Activated CD4-positive, alpha-beta memory T cell treated with anti-CD3 and anti-CD28 coated beads for 36 hours (primary cell): ENCODE measurements at regions of chr6 and their contacts with region 1.

Region 1: GRCh38 chr6:391559-392440 is at the start of gene IRF4:
- DNase-seq: peak; percentile 83
- H3K4me3 Mint-ChIP-seq: peak within 1 kb of the TSS; percentile 94
- H3K27ac Mint-ChIP-seq: peak within 1 kb of the TSS; percentile 99
- H3K4me1 Mint-ChIP-seq: peaks cover 50% of the 10 kb centered on the region
- H3K27me3 Mint-ChIP-seq: peaks cover 5% of the 10 kb centered on the region
- total RNA-seq, gene IRF4: 689 to 705 TPM

Region 2: DNA sequence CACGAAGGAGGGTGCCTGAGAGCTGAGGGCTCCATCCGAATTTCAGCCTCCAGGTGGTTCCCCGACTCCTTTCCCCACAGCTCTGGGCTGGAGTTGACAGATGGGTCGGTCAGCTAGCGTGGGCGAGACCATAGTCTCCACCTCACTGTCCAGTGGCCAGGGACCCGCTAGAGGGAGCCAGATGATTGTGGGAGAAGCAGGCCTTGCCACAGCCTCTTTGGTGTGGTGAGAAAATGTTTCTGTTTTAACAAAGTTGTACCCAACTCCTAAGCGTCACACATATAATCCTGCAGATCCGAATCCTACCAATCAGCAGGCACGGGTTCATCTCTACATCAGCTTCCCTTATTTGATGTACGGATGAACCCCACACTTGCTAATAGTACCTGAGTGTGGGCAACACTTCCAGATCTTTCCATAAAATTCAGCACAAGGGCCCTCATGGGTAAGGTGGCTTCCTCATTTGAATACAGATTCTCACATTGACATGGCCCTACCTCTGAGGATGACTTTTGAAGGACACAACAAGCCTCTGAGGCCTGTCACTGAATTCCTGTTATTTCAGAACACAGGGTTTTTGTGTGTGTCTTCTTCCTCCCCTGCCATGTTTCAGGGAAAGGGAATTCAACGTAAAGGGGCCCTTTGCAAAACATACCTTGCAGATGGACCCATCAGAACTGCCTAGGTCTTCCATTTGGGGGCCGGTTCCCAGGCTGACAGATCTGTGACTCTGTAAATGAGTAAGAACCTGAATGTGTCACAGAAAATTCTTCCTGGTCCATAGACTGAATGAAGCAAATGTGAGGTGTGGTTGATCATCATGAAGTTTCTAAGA is 202.8 kb before region 1 on chr6:
- CTCF ChIA-PET with region 1: interaction called, 54 read pairs
- POLR2A ChIA-PET with region 1: interaction called, 16 read pairs
- intact Hi-C with region 1: loop called (anchors 1 kb)
- DNase-seq: peak; percentile 93
- H3K4me3 Mint-ChIP-seq: peak overlapping the region; percentile 1
- H3K27ac Mint-ChIP-seq: peak overlapping the region; percentile 64
- H3K4me1 Mint-ChIP-seq: peaks cover 44% of the 10 kb centered on the region
- H3K27me3 Mint-ChIP-seq: peaks cover 2% of the 10 kb centered on the region

Region 3: GRCh38 chr6:319177-320131 is 72.3 kb before region 1 on chr6:
- CTCF ChIA-PET with region 1: interaction called, 5 read pairs
- POLR2A ChIA-PET with region 1: interaction called, 7 read pairs
- intact Hi-C with region 1: loop called (anchors 2 kb)
- DNase-seq: peak; percentile 55
- H3K4me3 Mint-ChIP-seq: no peak overlapping the region
- H3K27ac Mint-ChIP-seq: peak overlapping the region; percentile 60
- H3K4me1 Mint-ChIP-seq: peaks cover 20% of the 10 kb centered on the region
- H3K27me3 Mint-ChIP-seq: peaks cover 2% of the 10 kb centered on the region

Region 4: DNA sequence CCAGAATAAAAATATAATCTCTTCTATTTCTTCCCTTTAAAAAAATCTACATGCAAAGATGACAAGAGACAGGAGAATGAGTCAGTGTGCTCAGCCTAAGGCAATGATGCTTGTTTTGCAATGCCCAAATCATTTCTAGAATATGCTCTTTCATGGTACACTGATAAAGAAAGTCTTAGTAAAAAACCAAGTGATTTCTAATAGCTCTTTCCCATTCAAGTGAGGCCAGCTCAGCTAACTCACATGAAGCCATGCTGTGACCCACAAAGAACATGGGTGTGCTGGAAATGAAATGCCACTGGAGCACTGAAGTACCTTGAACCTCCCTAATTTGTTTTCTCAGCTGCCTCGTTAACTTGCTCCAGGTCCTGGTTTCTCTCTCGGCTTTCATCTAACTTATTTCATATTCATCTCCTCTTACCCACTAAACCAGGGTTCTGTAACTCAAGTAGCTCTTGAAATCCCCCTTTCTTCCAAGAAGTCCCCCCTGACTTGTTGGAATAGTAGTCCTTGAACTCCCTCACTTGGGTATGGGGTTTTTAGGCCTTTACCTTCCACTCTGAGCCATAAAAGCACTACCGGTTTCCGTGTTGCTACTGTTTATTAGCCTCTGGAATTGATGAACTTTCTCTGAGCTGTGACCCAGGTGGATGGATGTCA is 92.4 kb after region 1 on chr6:
- CTCF ChIA-PET with region 1: no interaction called
- POLR2A ChIA-PET with region 1: interaction called, 136 read pairs
- intact Hi-C with region 1: no loop called
- DNase-seq: peak; percentile 75
- H3K4me3 Mint-ChIP-seq: peak overlapping the region; percentile 58
- H3K27ac Mint-ChIP-seq: peak overlapping the region; percentile 99
- H3K4me1 Mint-ChIP-seq: peaks cover 73% of the 10 kb centered on the region
- H3K27me3 Mint-ChIP-seq: no peaks in the 10 kb centered on the region

Region 5: DNA sequence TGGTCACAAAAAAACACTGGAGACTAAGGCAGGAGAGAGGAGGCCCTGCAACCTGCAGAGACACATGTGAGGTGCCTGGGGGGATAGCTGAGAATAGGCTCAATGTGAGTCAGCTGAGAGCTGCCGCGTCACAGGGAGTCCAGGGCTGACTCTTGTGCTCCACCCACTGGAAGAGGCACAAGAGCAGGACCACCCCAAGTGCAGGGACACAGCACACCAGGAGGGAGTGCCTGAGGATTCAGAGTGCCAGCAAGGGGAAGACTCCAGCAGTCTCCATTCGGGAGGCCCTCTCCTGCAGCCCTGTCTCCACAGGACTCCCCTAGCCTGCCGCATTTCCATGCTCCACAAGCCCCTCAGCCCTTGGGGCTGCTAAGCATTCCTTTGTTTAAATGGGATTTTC is 159.6 kb after region 1 on chr6:
- CTCF ChIA-PET with region 1: interaction called, 3 read pairs
- POLR2A ChIA-PET with region 1: interaction called, 27 read pairs
- intact Hi-C with region 1: loop called (anchors 1 kb)
- DNase-seq: peak; percentile 68
- H3K4me3 Mint-ChIP-seq: no peak overlapping the region
- H3K27ac Mint-ChIP-seq: peak overlapping the region; percentile 97
- H3K4me1 Mint-ChIP-seq: peaks cover 69% of the 10 kb centered on the region
- H3K27me3 Mint-ChIP-seq: no peaks in the 10 kb centered on the region

Region 6: DNA sequence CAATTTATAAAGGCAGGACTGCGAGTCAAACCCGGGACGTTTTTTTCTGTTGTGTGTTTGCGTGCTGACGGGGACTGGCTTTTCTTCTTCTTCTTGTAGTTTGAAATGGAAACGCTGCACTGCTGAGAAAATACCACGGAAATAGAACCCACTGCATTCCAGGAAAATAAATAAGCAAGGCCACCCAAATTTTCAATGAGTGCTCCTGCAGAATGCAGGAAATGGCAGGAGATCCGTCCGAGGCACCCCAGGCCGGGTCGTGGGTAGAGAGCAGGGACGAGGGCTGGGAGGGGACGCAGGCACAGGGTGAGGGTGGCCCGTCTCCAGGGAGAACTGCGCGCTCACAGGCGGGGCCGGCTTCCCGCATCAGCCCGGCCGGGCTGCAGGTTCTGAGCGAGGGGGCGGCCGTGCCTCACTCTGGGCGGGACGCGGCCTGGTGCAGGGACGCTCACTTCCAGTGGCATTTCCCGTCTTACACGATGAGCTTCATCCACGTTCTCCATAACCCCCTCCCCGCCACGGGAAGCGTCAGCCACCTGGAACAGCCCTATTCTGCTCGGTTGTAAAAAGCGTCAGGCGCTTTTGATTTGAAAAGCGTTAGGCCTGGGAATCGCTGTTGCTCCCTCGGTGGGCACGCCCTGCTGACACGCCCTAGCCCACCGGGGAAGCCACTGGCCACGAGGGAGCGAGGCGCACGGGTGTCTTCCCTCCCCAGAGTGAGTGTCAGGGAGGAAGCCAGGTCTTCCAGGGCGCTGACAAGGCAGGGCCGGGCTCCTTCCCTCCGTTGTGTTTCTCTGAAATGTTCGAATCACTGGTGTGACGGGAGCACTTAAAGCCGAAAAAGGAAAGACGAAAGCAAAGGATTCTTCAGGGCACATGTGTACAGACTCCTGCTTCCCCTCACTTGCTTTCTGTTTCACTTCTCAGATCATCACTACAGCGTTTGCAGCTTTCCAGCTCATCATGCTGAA is 319.1 kb after region 1 on chr6:
- CTCF ChIA-PET with region 1: no interaction called
- POLR2A ChIA-PET with region 1: no interaction called
- intact Hi-C with region 1: loop called (anchors 2 kb)
- DNase-seq: peak; percentile 69
- H3K4me3 Mint-ChIP-seq: peak overlapping the region; percentile 94
- H3K27ac Mint-ChIP-seq: peak overlapping the region; percentile 96
- H3K4me1 Mint-ChIP-seq: peaks cover 26% of the 10 kb centered on the region
- H3K27me3 Mint-ChIP-seq: peaks cover 7% of the 10 kb centered on the region